OCI-LY7 (cell line): ENCODE measurements at regions of chr13 and their contacts with region 1.

Region 1: GRCh38 chr13:27424246-27425157 is at the start of gene GTF3A:
- DNase-seq: peak; percentile 91
- H3K4me3 ChIP-seq: peak within 1 kb of the TSS; percentile 94
- H3K27ac ChIP-seq: peak within 1 kb of the TSS; percentile 73
- H3K4me1 ChIP-seq: peaks cover 25% of the 10 kb centered on the region
- CTCF ChIP-seq: no peak
- total RNA-seq, gene GTF3A: 220 and 251 TPM in 2 replicates

Region 2: DNA sequence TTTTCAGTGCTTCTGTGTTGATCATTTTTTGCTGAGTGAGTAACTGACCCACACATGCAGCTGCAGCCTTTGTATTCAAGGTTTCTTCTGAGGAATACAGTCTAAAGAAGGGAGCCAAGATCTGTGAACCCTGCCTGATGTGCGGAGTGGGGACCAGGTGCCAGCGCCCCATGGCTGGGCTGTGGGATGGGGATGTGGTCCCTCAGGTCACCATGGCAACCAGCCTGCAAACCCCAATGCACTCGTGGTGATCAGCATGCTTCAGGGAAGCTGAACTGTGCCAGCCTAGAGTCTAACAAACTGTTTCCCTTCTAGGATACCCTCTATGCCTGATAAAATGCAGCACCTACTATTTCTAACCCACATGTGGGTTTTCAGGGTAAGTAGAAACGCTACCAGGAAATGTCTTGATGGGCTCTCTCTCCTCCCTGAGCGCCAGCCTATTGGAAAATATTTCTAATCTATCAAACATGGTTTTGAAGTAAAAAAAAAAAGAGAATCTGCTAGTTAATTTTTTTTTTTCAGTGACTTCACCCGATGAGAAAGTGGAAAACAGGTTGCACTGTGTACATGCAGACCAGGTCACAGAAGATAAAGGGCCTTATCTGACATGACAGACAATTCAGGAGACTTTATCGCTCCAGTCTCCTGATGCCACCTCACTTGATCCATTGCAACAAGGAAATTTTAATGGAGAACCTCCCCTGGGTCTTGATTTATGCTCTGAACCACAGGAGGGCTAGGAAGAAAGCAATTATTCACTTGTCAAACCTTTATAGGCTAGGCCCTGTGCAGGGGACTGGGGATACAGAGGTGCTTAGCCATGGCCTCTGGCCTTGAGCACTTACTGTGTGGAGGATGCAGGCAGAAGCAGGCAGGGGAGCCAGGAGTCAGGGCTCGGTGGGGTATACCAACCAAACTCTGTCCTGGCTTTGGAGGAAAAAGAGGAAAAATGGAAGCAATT is 102.8 kb before region 1 on chr13:
- CTCF ChIA-PET with region 1: no interaction called
- POLR2A ChIA-PET with region 1: no interaction called
- intact Hi-C with region 1: no loop called
- DNase-seq: no peak
- H3K4me3 ChIP-seq: no peak overlapping the region
- H3K27ac ChIP-seq: no peak overlapping the region
- H3K4me1 ChIP-seq: no peaks in the 10 kb centered on the region
- CTCF ChIP-seq: no peak

Region 3: DNA sequence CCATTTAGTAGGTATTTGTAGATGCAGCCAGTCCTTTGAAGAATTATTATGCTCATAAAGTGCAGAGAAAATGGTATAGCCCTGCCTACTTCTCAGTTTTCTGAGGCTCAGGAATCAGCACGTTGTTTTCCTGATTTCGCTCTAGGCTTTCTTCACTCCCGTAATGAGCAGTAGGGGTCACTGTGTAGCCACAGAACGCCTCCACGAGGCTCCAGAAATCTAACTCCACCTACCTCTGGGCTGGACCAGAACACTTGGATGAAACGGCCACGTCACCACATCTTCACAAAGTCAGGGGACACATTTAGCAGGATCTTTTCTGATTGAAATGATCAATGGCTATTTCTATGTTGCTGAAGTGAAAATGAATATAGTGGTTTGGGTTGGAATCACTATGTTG is 49.9 kb before region 1 on chr13:
- CTCF ChIA-PET with region 1: no interaction called
- POLR2A ChIA-PET with region 1: no interaction called
- intact Hi-C with region 1: loop called (anchors 5 kb)
- DNase-seq: peak; percentile 68
- H3K4me3 ChIP-seq: no peak overlapping the region
- H3K27ac ChIP-seq: no peak overlapping the region
- H3K4me1 ChIP-seq: no peaks in the 10 kb centered on the region
- CTCF ChIP-seq: peak; percentile 91

Region 4: DNA sequence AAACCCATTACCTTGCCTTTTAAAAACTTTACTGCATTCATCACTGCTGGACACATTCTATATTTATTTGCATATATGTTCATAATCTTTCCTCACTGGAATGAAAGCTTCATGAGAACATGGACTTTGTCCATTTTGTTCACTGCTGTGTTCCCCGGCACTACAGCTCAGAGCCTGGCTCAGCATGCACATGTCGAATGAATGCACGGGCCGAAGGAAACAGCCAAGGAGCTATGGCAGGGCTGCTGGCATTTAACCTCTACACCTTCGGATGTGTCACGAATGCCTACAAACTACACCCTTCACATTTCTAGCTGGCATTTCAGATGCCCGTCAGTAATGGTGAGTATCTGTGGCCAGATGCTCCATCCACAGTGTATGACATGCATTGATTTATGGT is 18.3 kb after region 1 on chr13:
- CTCF ChIA-PET with region 1: interaction called, 3 read pairs
- POLR2A ChIA-PET with region 1: interaction called, 38 read pairs
- intact Hi-C with region 1: no loop called
- DNase-seq: no peak
- H3K4me3 ChIP-seq: no peak overlapping the region
- H3K27ac ChIP-seq: no peak overlapping the region
- H3K4me1 ChIP-seq: peaks cover 24% of the 10 kb centered on the region
- CTCF ChIP-seq: no peak

Region 5: DNA sequence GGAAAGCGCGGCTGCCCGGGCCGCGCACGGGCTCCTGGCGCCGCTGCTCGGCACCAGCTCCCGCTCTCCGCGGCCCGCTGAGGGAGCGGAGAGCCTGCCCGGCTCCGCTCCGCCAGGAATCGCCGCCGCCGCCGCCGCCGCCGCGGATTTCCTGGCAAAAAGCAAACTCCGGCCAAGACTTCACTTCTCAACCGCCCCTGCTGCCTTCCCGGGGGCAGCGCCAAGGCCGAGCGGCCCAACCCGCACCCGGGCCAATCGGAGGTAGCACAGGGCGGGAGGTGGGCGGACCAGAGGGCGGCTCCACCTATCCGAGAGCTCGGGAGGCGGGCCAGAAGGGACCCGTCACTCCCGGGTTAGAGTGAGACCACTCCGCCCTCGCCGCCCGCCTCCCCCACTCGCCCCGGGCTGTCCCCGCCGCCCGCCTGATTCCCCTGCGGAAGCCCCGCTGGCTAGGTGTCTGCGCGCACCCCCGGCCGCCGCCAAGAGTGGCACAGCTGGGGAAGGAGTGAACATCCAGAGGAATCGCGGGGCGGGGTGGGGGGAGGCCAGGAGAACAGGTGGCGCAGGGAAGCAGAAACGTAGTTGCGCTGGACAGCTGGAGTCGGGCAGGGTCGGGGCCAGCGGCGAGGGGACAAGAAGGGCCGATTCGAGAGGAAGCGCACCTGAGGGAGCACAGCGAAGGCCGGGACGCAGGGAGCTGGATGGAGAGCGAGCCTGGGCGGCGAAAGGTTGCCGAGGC is 196.0 kb after region 1 on chr13 and contains the start of gene LNX2:
- CTCF ChIA-PET with region 1: interaction called, 3 read pairs
- POLR2A ChIA-PET with region 1: interaction called, 6 read pairs
- intact Hi-C with region 1: loop called (anchors 5 kb)
- DNase-seq: peak; percentile 97
- H3K4me3 ChIP-seq: peak within 1 kb of the TSS; percentile 88
- H3K27ac ChIP-seq: peak within 1 kb of the TSS; percentile 83
- H3K4me1 ChIP-seq: peaks cover 36% of the 10 kb centered on the region
- CTCF ChIP-seq: no peak
- total RNA-seq, gene LNX2: 5.9 and 6.8 TPM in 2 replicates